Naive thymus-derived CD4-positive, alpha-beta T cell (primary cell): ENCODE measurements at regions of chr4 and their contacts with region 1.

Region 1: GRCh38 chr4:38489924-38490639 is 173.9 kb upstream of the KLF3 start:
- DNase-seq: peak in 6 of 9 donors; percentile 26 to 63 (median 43)
- ATAC-seq: peak; percentile 67
- H3K4me3 ChIP-seq: peak overlapping the region; percentile 25
- H3K4me3 Mint-ChIP-seq: peak overlapping the region; percentile 48 to 85 (median 77)
- H3K27ac ChIP-seq: peak overlapping the region; percentile 60
- H3K27ac Mint-ChIP-seq: peak overlapping the region; percentile 80 to 100 (median 93)
- H3K4me1 ChIP-seq: peaks cover 28 to 30% of the 10 kb centered on the region in 2 donors
- H3K4me1 Mint-ChIP-seq: peaks cover 17 to 67% (median 43%) of the 10 kb centered on the region in 7 donors
- H3K27me3 ChIP-seq: no peaks in the 10 kb centered on the region
- H3K27me3 Mint-ChIP-seq: peaks cover 0 to 8% (median 0%) of the 10 kb centered on the region in 5 donors

Region 2: GRCh38 chr4:38424151-38424871 is 65.8 kb before region 1 on chr4:
- CTCF ChIA-PET with region 1: no interaction called
- POLR2A ChIA-PET with region 1: no interaction called
- intact Hi-C with region 1: no loop called
- DNase-seq: no peak
- ATAC-seq: no peak
- H3K4me3 ChIP-seq: no peak overlapping the region
- H3K4me3 Mint-ChIP-seq: no peak overlapping the region
- H3K27ac ChIP-seq: no peak overlapping the region
- H3K27ac Mint-ChIP-seq: no peak overlapping the region
- H3K4me1 ChIP-seq: peaks cover 0 to 5% of the 10 kb centered on the region in 2 donors
- H3K4me1 Mint-ChIP-seq: peaks cover 0 to 14% (median 8%) of the 10 kb centered on the region in 7 donors
- H3K27me3 ChIP-seq: no peaks in the 10 kb centered on the region
- H3K27me3 Mint-ChIP-seq: peaks cover 0 to 12% (median 0%) of the 10 kb centered on the region in 5 donors

Region 3: DNA sequence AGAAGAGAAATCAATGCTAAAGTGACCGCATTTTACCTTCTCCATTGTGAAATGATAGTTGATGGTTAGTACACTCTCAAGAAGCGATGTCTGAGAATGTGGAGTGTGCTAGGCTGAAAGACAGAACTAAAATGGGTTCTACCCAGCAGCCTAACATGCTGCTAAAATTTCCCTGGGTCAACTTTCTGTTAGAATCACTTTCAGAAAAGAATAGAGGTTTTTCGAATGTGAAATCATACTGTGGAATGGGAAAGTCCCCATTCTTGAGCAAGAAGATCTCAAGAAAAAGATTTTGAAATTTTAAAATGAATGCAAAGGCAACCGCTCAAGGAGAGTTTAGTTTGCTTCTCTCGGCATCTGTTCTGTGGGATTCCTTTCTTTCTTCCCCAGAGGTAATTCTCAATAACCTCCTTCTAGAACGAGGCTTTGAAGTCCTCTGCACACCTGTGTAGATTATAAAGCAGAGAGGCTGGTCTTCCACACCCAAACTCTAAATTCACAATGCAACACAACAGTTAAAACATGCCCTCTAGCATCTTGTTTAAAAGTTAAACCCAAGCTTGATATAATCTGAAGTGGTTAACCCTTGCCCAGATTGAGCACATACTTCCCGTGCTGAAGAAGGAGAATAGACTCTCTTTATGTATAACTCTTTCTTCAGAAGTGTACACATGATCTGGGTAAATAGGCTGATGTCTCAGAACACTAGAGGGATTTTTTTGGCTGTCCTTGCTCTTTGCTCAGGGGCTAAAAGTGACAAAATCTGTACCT is 34.8 kb before region 1 on chr4:
- CTCF ChIA-PET with region 1: no interaction called
- POLR2A ChIA-PET with region 1: no interaction called
- intact Hi-C with region 1: loop called in 1 of 2 experiments (anchors 5 kb)
- DNase-seq: peak in 5 of 9 donors; percentile 8 to 36 (median 15)
- ATAC-seq: peak; percentile 65
- H3K4me3 ChIP-seq: no peak overlapping the region
- H3K4me3 Mint-ChIP-seq: peak overlapping the region; percentile 20 to 78 (median 62)
- H3K27ac ChIP-seq: no peak overlapping the region
- H3K27ac Mint-ChIP-seq: peak overlapping the region; percentile 24 to 91 (median 81)
- H3K4me1 ChIP-seq: peaks cover 0 to 17% of the 10 kb centered on the region in 2 donors
- H3K4me1 Mint-ChIP-seq: peaks cover 18 to 44% (median 37%) of the 10 kb centered on the region in 7 donors
- H3K27me3 ChIP-seq: no peaks in the 10 kb centered on the region
- H3K27me3 Mint-ChIP-seq: peaks cover 0 to 22% (median 0%) of the 10 kb centered on the region in 5 donors

Region 4: DNA sequence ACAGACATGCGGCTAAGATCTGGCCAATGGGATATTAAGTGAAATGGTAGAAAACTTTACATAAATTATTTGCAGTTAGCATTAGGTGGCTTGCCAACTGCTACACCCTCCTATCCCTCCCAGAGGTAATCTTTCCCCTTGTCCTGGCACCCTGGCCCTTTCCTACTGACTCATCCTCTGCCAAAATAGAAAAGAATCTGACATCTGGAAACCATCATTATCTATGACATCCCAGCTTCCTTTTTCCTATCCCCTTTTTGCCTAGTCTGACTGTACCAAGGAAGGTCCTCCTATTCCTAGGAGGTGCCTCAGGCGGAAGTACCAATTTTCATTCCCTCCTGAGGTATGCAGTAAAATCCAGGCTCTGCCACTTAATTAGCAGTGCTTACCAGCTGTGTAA is 10.4 kb after region 1 on chr4:
- CTCF ChIA-PET with region 1: interaction called, 3 read pairs
- POLR2A ChIA-PET with region 1: interaction called, 17 read pairs
- intact Hi-C with region 1: no loop called
- DNase-seq: no peak
- ATAC-seq: no peak
- H3K4me3 ChIP-seq: no peak overlapping the region
- H3K4me3 Mint-ChIP-seq: no peak overlapping the region
- H3K27ac ChIP-seq: no peak overlapping the region
- H3K27ac Mint-ChIP-seq: no peak overlapping the region
- H3K4me1 ChIP-seq: peaks cover 5% of the 10 kb centered on the region in 2 donors
- H3K4me1 Mint-ChIP-seq: peaks cover 8 to 29% (median 23%) of the 10 kb centered on the region in 7 donors
- H3K27me3 ChIP-seq: no peaks in the 10 kb centered on the region
- H3K27me3 Mint-ChIP-seq: peaks cover 0 to 43% (median 0%) of the 10 kb centered on the region in 5 donors

Region 5: GRCh38 chr4:38647101-38647819 is 157.2 kb after region 1 on chr4:
- CTCF ChIA-PET with region 1: no interaction called
- POLR2A ChIA-PET with region 1: no interaction called
- intact Hi-C with region 1: no loop called
- DNase-seq: no peak
- ATAC-seq: no peak
- H3K4me3 ChIP-seq: no peak overlapping the region
- H3K4me3 Mint-ChIP-seq: no peak overlapping the region
- H3K27ac ChIP-seq: no peak overlapping the region
- H3K27ac Mint-ChIP-seq: peak overlapping the region in 6 of 9 donors; percentile 49 to 93 (median 58)
- H3K4me1 ChIP-seq: no peaks in the 10 kb centered on the region
- H3K4me1 Mint-ChIP-seq: peaks cover 7 to 26% (median 19%) of the 10 kb centered on the region in 7 donors
- H3K27me3 ChIP-seq: no peaks in the 10 kb centered on the region
- H3K27me3 Mint-ChIP-seq: peaks cover 0 to 35% (median 0%) of the 10 kb centered on the region in 5 donors

Region 6: GRCh38 chr4:40455340-40455902 is 1965.3 kb after region 1 on chr4:
- CTCF ChIA-PET with region 1: no interaction called
- POLR2A ChIA-PET with region 1: no interaction called
- intact Hi-C with region 1: no loop called
- DNase-seq: no peak
- ATAC-seq: no peak
- H3K4me3 ChIP-seq: no peak overlapping the region
- H3K4me3 Mint-ChIP-seq: no peak overlapping the region
- H3K27ac ChIP-seq: no peak overlapping the region
- H3K27ac Mint-ChIP-seq: no peak overlapping the region
- H3K4me1 ChIP-seq: no peaks in the 10 kb centered on the region
- H3K4me1 Mint-ChIP-seq: peaks cover 6 to 24% (median 14%) of the 10 kb centered on the region in 7 donors
- H3K27me3 ChIP-seq: no peaks in the 10 kb centered on the region
- H3K27me3 Mint-ChIP-seq: no peaks in the 10 kb centered on the region